Common myeloid progenitor, CD34-positive (primary cell): ENCODE measurements at regions of chr13 and their contacts with region 1.

Region 1: GRCh38 chr13:99386911-99387788 is 80.0 kb upstream of the GPR183 start:
- DNase-seq: peak; percentile 76 to 82 (median 77)
- H3K4me3 ChIP-seq: no peak overlapping the region
- H3K27ac ChIP-seq: no peak overlapping the region
- H3K4me1 ChIP-seq: peaks cover 3 to 26% (median 22%) of the 10 kb centered on the region in 4 experiments
- H3K27me3 ChIP-seq: no peaks in the 10 kb centered on the region

Region 2: GRCh38 chr13:99151516-99151915 is 235.6 kb before region 1 on chr13:
- CTCF ChIA-PET with region 1: no interaction called
- POLR2A ChIA-PET with region 1: no interaction called
- DNase-seq: peak in 2 of 3 donors; percentile 25 to 35
- H3K4me3 ChIP-seq: no peak overlapping the region
- H3K27ac ChIP-seq: no peak overlapping the region
- H3K4me1 ChIP-seq: peaks cover 0 to 12% (median 7%) of the 10 kb centered on the region in 4 experiments
- H3K27me3 ChIP-seq: peaks cover 0 to 60% (median 18%) of the 10 kb centered on the region in 5 experiments

Region 3: DNA sequence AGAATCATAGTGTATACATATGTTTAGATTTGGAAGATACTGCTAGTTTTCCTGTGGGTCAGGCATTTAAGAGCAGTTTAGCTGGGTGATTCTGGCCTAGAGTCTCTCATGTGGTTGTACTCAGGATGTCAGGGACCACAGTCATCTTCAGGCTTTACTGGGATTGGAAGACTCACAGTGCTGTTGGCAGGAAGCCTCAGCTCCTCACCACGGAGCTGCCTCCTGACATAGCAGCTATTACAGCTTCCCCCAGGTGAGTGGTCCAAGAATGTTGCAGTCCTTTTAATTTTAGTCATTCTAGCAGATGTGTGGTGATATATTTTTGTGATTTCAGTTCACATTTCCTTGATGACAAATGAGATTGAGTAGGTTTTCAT is 112.1 kb before region 1 on chr13:
- CTCF ChIA-PET with region 1: interaction called, 127 read pairs
- POLR2A ChIA-PET with region 1: interaction called, 3 read pairs
- DNase-seq: peak in 2 of 3 donors; percentile 64 to 71
- H3K4me3 ChIP-seq: no peak overlapping the region
- H3K27ac ChIP-seq: no peak overlapping the region
- H3K4me1 ChIP-seq: peaks cover 34 to 66% (median 49%) of the 10 kb centered on the region in 4 experiments
- H3K27me3 ChIP-seq: no peaks in the 10 kb centered on the region

Region 4: GRCh38 chr13:99374994-99375737 is 12.0 kb before region 1 on chr13:
- CTCF ChIA-PET with region 1: interaction called, 42 read pairs
- POLR2A ChIA-PET with region 1: no interaction called
- DNase-seq: peak; percentile 85 to 96 (median 93)
- H3K4me3 ChIP-seq: peak overlapping the region in 3 of 7 experiments; percentile 18 to 53 (median 50)
- H3K27ac ChIP-seq: peak overlapping the region; percentile 64 to 76
- H3K4me1 ChIP-seq: peaks cover 4 to 35% (median 32%) of the 10 kb centered on the region in 4 experiments
- H3K27me3 ChIP-seq: no peaks in the 10 kb centered on the region

Region 5: DNA sequence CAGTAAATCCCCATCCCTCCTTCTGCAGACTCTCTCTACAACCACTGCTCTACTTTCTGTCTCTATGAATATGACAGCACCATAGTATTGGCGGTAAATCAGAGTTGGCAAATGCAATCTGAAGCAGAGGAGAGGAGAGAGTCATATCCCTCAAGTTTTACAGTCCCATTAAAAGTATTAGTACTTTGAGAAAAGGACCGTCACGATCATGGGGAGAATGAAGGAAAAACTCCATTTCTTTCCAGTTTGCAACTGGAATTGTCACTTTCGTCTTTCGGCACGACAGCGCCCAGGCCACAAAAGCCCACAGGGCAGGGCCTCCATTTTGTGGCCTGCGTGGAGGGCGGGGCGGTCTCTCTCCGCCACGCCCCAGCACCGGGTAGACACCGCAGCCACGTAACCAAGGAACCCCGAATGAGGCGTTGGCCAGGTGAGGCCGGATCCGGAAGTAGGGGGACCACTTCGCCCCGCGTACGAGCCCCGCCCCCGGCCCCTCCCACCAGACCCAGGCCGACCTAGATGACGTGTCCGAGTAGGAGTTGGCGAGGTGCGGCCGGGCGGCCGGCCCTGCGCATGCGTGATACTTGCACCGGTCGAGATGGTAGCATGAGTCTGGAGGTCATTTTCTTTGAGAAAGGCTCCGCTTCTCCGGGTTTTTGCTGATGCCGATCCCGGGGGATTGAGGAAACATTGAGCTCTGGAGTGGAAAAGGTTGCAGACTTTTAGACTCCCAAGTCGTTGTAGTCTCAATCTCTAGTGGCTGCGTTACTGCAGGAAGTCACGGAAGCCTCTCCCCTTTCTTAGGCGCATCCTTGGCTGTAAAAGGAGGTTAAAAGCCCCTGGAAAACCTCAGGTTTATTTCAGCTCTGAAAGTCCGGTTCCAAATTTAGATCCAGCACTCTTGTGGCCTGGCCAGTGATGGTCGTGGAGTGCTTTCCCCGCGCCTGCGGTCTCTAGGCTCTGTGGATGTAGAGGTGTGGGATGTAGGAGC is 111.3 kb after region 1 on chr13:
- CTCF ChIA-PET with region 1: no interaction called
- POLR2A ChIA-PET with region 1: no interaction called
- DNase-seq: peak; percentile 96 to 98 (median 98)
- H3K4me3 ChIP-seq: peak overlapping the region; percentile 36 to 89 (median 80)
- H3K27ac ChIP-seq: peak overlapping the region; percentile 73 to 87
- H3K4me1 ChIP-seq: peaks cover 34 to 69% (median 46%) of the 10 kb centered on the region in 4 experiments
- H3K27me3 ChIP-seq: no peaks in the 10 kb centered on the region

Region 6: GRCh38 chr13:99666146-99666805 is 279.1 kb after region 1 on chr13:
- CTCF ChIA-PET with region 1: no interaction called
- POLR2A ChIA-PET with region 1: no interaction called
- DNase-seq: no peak
- H3K4me3 ChIP-seq: no peak overlapping the region
- H3K27ac ChIP-seq: no peak overlapping the region
- H3K4me1 ChIP-seq: no peaks in the 10 kb centered on the region
- H3K27me3 ChIP-seq: peaks cover 0 to 12% (median 5%) of the 10 kb centered on the region in 5 experiments